Endothelial cell of umbilical vein (primary cell): ENCODE measurements at regions of chr22 and their contacts with region 1.

Region 1: DNA sequence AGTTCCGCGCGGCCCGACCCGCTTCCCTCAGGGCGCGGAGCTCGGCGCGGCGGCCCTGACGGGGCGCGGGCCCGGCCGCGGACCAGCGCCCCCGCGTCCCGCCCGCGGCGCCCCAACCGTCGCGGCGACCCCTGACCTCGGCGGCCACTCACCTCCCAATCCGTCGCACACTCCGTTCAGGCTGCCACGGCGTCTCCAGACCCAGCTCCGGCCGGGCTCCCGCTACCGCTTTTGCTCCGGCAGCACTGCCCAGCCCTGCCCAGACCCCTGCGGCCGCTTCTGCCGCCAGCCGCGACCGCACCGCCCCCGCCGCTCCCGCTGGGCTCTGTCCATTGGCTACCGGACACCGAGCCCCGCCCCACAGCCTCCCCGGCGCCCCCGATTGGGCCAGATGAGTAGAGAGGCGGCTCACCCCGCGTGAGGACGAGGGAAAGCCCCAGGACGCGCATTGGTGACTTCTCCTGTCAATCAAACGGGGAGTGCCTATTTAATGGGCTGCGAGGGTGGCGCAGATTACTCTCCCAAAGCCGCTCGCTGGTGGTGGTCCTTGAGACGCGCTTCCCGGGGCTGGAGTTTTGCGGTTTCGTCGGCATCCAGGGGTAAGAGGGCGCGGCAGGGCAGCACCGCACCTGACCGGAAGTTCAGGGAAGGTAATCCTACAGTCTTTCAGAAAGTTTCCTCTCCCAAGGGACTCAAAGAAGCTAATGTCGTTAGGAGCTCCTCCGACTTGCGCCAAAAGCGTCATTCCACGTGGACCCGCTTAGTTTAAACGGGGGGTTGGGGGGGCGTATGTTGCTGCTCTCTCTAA is at the start of gene PACSIN2:
- DNase-seq: peak; percentile 98
- H3K4me3 ChIP-seq: peak within 1 kb of the TSS; percentile 72 to 96 (median 81)
- H3K27ac ChIP-seq: peak within 1 kb of the TSS; percentile 40
- H3K4me1 ChIP-seq: peaks cover 17% of the 10 kb centered on the region
- H3K27me3 ChIP-seq: peaks cover 0 to 1% of the 10 kb centered on the region in 2 experiments
- CTCF ChIP-seq: no peak
- POLR2A ChIP-seq: peak; percentile 81
- total RNA-seq, gene PACSIN2: 63.9 and 64.5 TPM in 2 replicates

Region 2: DNA sequence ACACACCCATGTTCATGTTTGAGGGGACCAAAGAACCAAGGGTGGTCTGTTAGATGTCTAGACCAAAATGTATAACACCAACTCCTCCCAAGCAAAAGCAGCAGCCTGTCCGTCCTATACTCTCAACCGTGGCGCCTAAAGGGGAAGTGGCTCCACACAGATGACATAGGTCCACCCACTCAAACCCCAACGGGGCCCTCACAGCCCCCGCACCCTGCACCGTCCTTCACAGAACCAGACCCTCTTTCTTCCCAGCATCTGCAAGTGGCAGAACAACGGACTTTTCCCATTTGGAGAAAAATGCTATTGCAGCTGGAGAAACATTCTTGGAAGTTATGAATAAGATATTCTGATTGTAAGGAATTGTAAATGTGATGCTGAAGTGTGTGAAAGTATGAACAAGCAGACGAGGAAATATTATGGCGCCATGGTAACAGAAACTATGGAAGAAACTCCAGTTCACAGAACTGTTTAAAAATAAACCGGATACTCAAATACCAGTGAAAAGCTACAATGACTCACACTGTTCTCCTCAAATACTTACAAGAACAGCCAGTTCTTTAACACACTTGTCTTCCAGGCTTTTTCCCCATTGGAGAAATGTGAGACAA is 81.5 kb before region 1 on chr22:
- CTCF ChIA-PET with region 1: no interaction called
- POLR2A ChIA-PET with region 1: interaction called, 6 read pairs
- dilution Hi-C with region 1: no loop called
- intact Hi-C with region 1: loop called (anchors 5 kb)
- DNase-seq: peak; percentile 95
- H3K4me3 ChIP-seq: peak overlapping the region in 1 of 3 experiments; percentile 33
- H3K27ac ChIP-seq: peak overlapping the region; percentile 98
- H3K4me1 ChIP-seq: peaks cover 40% of the 10 kb centered on the region
- H3K27me3 ChIP-seq: no peaks in the 10 kb centered on the region
- CTCF ChIP-seq: no peak
- POLR2A ChIP-seq: no peak

Region 3: GRCh38 chr22:42978453-42979103 is 36.5 kb before region 1 on chr22:
- CTCF ChIA-PET with region 1: no interaction called
- POLR2A ChIA-PET with region 1: interaction called, 4 read pairs
- dilution Hi-C with region 1: no loop called
- intact Hi-C with region 1: loop called (anchors 2 kb)
- DNase-seq: peak; percentile 76
- H3K4me3 ChIP-seq: no peak overlapping the region
- H3K27ac ChIP-seq: peak overlapping the region; percentile 4
- H3K4me1 ChIP-seq: peaks cover 11% of the 10 kb centered on the region
- H3K27me3 ChIP-seq: no peaks in the 10 kb centered on the region
- CTCF ChIP-seq: no peak
- POLR2A ChIP-seq: no peak

Region 4: DNA sequence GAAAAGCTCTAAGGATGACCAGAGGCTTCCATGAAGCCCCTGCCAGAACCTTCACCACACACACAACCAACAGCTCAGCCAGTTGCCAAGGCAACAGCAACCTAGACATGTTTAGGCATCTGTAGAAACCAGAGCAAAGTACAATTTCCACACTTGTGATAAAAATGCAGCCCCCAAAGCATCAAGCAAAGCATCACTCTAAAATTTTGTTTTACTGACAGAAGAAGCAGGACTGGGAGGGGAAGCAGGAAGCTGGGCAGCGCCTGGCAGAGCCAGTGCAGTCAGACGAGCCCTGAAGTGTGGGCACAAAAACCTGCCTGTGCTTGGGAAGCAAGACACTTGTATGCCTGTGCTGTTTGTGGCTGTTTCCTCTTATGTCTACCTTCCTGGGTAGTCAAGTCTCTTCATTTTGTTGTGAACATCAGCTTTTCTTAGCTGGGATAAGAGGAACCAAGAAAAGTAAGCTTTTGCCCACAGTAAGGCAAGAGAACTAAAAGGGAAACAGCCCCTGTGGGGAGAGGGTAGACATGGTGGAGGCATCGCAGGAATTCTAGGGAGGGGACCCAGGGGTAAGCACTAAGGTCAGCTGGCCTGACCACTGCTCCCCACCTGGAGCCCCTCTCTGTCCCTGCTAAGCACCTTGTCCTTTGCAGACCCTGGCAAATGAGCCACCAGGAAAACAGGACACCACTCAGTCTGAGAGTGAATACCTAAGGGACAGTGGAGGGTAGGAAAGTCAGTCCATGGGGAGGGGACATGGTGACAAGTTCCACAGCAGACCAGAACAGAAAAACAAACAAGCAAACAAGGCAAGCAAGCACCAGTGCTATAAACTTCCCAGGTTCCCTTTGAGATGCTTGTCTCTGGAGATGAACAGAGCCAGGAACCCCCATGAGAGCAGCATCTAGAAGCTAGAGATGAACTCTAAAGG is 13.5 kb before region 1 on chr22:
- CTCF ChIA-PET with region 1: interaction called, 10 read pairs
- POLR2A ChIA-PET with region 1: interaction called, 14 read pairs
- dilution Hi-C with region 1: no loop called
- intact Hi-C with region 1: no loop called
- DNase-seq: peak; percentile 29
- H3K4me3 ChIP-seq: peak overlapping the region in 1 of 3 experiments; percentile 16
- H3K27ac ChIP-seq: peak overlapping the region; percentile 78
- H3K4me1 ChIP-seq: peaks cover 59% of the 10 kb centered on the region
- H3K27me3 ChIP-seq: no peaks in the 10 kb centered on the region
- CTCF ChIP-seq: no peak
- POLR2A ChIP-seq: no peak

Region 5: DNA sequence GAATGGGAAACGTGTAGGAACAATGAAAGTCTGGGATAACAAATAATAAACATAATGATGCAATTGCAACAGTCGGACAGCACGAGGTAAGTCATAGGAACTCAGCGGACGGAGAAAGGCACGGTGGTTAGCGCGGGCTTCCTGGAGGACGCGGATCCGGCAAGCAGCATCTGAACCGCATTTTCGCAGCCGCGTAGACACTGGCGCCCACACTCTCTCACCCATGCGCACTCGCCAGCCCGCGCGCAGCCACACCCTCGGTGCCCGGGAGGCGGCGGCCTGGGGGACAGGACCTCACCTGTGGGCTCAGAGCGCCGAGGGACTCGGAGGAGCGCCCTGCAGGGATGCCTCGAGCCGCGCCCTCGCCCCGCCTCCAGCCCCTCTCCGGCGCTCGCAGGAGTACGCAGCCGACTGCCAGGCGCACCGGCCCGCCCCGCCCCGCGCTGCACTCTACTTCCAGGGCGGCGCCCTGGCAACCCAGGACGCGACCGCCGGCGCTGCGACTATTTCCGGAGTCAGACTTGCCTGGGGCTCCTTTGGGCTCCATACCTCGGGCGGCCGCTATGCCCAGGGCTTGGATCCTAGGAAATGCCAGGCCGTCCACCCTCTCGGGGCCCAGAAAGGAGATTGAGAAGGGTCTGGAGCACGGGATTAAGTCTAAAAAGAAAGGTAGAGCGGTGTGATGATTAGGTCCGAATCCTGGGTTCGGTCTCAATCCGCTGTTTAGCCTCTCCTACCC is 74.1 kb after region 1 on chr22 and contains the start of gene TTLL1:
- CTCF ChIA-PET with region 1: interaction called, 5 read pairs
- POLR2A ChIA-PET with region 1: no interaction called
- dilution Hi-C with region 1: no loop called
- intact Hi-C with region 1: loop called (anchors 2 kb)
- DNase-seq: peak; percentile 84
- H3K4me3 ChIP-seq: peak within 1 kb of the TSS; percentile 38 to 91 (median 74)
- H3K27ac ChIP-seq: peak within 1 kb of the TSS; percentile 33
- H3K4me1 ChIP-seq: peaks cover 4% of the 10 kb centered on the region
- H3K27me3 ChIP-seq: no peaks in the 10 kb centered on the region
- CTCF ChIP-seq: peak in 1 of 2 donors; percentile 4
- POLR2A ChIP-seq: peak; percentile 70
- total RNA-seq, gene TTLL1: 9.0 and 11.2 TPM in 2 replicates